K562 (cell line): ENCODE measurements at regions of chr1 and their contacts with region 1.

Region 1: DNA sequence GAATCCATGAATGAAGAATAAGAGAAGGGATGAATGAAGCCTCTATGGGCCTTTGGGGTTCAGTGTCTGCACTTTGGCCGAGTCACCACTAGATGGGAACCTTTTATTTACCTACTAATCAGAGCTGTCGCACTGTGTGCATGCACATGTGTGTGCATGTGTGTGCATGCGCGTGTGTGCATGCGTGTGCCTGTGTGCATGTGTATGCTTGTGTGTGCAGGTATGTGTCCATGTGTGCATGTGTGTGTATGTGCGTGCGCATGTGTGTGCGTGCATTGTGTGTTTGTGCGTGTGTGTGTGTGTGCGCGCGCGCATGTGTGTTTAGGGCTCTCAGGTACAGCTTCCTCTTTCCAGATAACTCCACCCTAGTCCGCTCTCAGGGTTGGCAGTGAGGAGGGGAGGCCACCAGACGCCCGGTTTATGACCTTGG is 20.4 kb upstream of the UBXN10 start:
- DNase-seq: peak; percentile 46 to 66 (median 56)
- ATAC-seq: peak; percentile 86
- H3K4me3 ChIP-seq: no peak overlapping the region
- H3K27ac ChIP-seq: no peak overlapping the region
- H3K4me1 ChIP-seq: peaks cover 0 to 6% of the 10 kb centered on the region in 2 experiments; a peak in 2 of 5 replicates
- H3K27me3 ChIP-seq: peaks cover 0 to 19% of the 10 kb centered on the region in 2 experiments; a peak in 3 of 5 replicates
- CTCF ChIP-seq: peak; percentile 67 to 75 (median 70)
- EP300 ChIP-seq: no peak
- POLR2A ChIP-seq: no peak
- RAD21 ChIP-seq: peak in 1 of 2 experiments; percentile 87; a peak in 3 of 4 replicates

Region 2: DNA sequence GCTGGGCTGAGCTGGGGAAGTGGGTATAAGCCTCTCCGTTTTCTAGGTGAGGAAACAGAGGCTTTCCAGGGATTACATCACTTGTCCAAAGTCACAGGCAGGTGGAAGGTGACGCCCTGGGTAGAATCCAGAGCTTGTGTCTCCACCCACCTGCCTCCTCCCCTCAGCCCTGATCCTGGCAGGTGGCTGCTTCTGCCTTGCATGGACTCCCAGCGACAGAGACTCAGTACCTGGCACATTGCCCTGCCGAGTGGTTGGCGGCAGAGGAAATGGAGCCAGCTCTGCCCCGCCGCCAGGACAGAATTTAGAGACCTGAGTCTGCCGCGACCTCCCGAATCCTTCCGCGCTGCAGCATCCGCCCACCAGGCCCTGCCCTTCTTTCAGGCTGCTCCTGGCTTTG is 244.2 kb before region 1 on chr1:
- CTCF ChIA-PET with region 1: no interaction called
- POLR2A ChIA-PET with region 1: no interaction called
- in situ Hi-C with region 1: no loop called
- intact Hi-C with region 1: no loop called
- DNase-seq: no peak
- ATAC-seq: no peak; the same call in 2 of the 3 replicates
- H3K4me3 ChIP-seq: no peak overlapping the region
- H3K27ac ChIP-seq: no peak overlapping the region
- H3K4me1 ChIP-seq: peaks cover 0 to 8% of the 10 kb centered on the region in 2 experiments; a peak in 2 of 5 replicates
- H3K27me3 ChIP-seq: peaks cover 26 to 62% of the 10 kb centered on the region in 2 experiments; a peak in 4 of 5 replicates
- CTCF ChIP-seq: no peak
- EP300 ChIP-seq: no peak
- POLR2A ChIP-seq: no peak
- RAD21 ChIP-seq: no peak

Region 3: GRCh38 chr1:20185834-20186782 is 20.6 kb after region 1 on chr1 and contains the starts of genes PLA2G2C and UBXN10:
- CTCF ChIA-PET with region 1: no interaction called
- POLR2A ChIA-PET with region 1: interaction called, 4 read pairs
- in situ Hi-C with region 1: no loop called
- intact Hi-C with region 1: loop called (anchors 2 kb)
- DNase-seq: peak; percentile 94 to 97 (median 96)
- ATAC-seq: peak; percentile 84
- H3K4me3 ChIP-seq: peak within 1 kb of the TSS; percentile 74
- H3K27ac ChIP-seq: peak within 1 kb of the TSS; percentile 95
- H3K4me1 ChIP-seq: peaks cover 69 to 72% of the 10 kb centered on the region in 2 experiments
- H3K27me3 ChIP-seq: no peaks in the 10 kb centered on the region
- CTCF ChIP-seq: peak in 1 of 3 experiments; percentile 5; a peak in 1 of 6 replicates
- EP300 ChIP-seq: peak; percentile 75
- POLR2A ChIP-seq: peak; percentile 59; the same call in 1 of the 2 replicates
- RAD21 ChIP-seq: no peak; a peak in 1 of 4 replicates
- polyA plus RNA-seq, gene PLA2G2C: 0.21 to 0.48 TPM
- polyA plus RNA-seq, gene UBXN10: 12.3 to 13.6 TPM

Region 4: DNA sequence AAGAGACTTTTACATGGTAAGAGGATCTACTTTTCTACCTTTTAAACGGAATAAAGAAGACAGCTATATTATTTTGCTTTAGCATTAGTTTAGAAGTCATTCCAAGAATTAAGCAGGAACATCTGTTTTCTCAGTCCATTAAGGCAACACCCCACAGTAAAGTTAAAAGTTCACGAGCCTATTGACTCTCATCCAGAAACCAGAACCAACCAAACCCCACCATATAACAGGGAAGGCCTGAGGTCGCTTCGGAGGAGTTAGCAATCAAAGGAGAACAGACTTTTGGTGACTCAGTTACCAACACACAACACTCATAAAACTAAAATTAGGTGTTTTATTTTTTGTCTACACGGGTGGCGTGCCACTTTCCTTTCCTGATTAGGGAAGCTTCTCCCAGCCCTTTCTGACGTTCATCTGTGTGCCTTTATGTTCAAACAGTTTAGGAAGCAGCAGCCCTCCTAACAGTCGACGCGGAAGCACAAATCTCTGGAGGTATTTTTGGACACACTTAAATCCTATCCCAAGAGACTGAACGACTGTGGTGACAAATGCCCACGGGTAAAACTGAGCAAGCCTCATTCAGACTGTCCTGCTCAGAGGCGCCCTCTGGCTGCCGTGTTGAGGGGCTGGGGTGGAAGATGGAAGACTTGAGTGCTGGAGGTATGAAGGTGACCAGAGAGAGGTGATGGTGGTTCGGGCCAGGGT is 29.4 kb after region 1 on chr1:
- CTCF ChIA-PET with region 1: no interaction called
- POLR2A ChIA-PET with region 1: no interaction called
- in situ Hi-C with region 1: no loop called
- intact Hi-C with region 1: loop called (anchors 5 kb)
- DNase-seq: peak; percentile 78 to 90 (median 78)
- ATAC-seq: peak; percentile 83
- H3K4me3 ChIP-seq: no peak overlapping the region
- H3K27ac ChIP-seq: no peak overlapping the region
- H3K4me1 ChIP-seq: peaks cover 31 to 59% of the 10 kb centered on the region in 2 experiments
- H3K27me3 ChIP-seq: no peaks in the 10 kb centered on the region
- CTCF ChIP-seq: peak; percentile 92 to 99 (median 92)
- EP300 ChIP-seq: 0 out of 2 replicates have a peak, but pooled peaks have one; percentile 21
- POLR2A ChIP-seq: no peak
- RAD21 ChIP-seq: peak; percentile 63 to 89